Dorsolateral prefrontal cortex (tissue), 120 donors: ENCODE measurements at regions of chr7 and their contacts with region 1.

Region 1: GRCh38 chr7:5248201-5248885 is 34.4 kb upstream of the SLC29A4 start:
- DNase-seq: peak in 1 of 10 donors; percentile 50
- H3K4me3 ChIP-seq: no peak overlapping the region
- H3K27ac ChIP-seq: no peak overlapping the region
- H3K27me3 ChIP-seq: no peaks in the 10 kb centered on the region
- CTCF ChIP-seq: no peak

Region 2: GRCh38 chr7:5177060-5177459 is 71.3 kb before region 1 on chr7:
- intact Hi-C with region 1: no loop called
- DNase-seq: peak in 8 of 10 donors; percentile 36 to 75 (median 60)
- H3K4me3 ChIP-seq: peak overlapping the region in 32 of 59 donors; percentile 2 to 59 (median 28)
- H3K27ac ChIP-seq: peak overlapping the region in 3 of 59 donors; percentile 1 to 68 (median 39)
- H3K27me3 ChIP-seq: no peaks in the 10 kb centered on the region
- CTCF ChIP-seq: no peak

Region 3: GRCh38 chr7:5332579-5332978 is 84.2 kb after region 1 on chr7:
- intact Hi-C with region 1: no loop called
- DNase-seq: no peak
- H3K4me3 ChIP-seq: no peak overlapping the region
- H3K27ac ChIP-seq: no peak overlapping the region
- H3K27me3 ChIP-seq: no peaks in the 10 kb centered on the region
- CTCF ChIP-seq: no peak

Region 4: GRCh38 chr7:5450549-5451372 is 202.4 kb after region 1 on chr7:
- intact Hi-C with region 1: loop called in 1 of 2 experiments (anchors 10 kb)
- DNase-seq: peak in 9 of 10 donors; percentile 44 to 76 (median 61)
- H3K4me3 ChIP-seq: peak overlapping the region in 10 of 59 donors; percentile 1 to 36 (median 16)
- H3K27ac ChIP-seq: peak overlapping the region in 16 of 59 donors; percentile 0 to 66 (median 30)
- H3K27me3 ChIP-seq: no peaks in the 10 kb centered on the region
- CTCF ChIP-seq: peak in 55 of 56 donors; percentile 60 to 90 (median 76)